Activated B cell treated with CpG ODN at 0.5 μM for 24 hours (primary cell): ENCODE measurements at regions of chr2 and their contacts with region 1.

Region 1: DNA sequence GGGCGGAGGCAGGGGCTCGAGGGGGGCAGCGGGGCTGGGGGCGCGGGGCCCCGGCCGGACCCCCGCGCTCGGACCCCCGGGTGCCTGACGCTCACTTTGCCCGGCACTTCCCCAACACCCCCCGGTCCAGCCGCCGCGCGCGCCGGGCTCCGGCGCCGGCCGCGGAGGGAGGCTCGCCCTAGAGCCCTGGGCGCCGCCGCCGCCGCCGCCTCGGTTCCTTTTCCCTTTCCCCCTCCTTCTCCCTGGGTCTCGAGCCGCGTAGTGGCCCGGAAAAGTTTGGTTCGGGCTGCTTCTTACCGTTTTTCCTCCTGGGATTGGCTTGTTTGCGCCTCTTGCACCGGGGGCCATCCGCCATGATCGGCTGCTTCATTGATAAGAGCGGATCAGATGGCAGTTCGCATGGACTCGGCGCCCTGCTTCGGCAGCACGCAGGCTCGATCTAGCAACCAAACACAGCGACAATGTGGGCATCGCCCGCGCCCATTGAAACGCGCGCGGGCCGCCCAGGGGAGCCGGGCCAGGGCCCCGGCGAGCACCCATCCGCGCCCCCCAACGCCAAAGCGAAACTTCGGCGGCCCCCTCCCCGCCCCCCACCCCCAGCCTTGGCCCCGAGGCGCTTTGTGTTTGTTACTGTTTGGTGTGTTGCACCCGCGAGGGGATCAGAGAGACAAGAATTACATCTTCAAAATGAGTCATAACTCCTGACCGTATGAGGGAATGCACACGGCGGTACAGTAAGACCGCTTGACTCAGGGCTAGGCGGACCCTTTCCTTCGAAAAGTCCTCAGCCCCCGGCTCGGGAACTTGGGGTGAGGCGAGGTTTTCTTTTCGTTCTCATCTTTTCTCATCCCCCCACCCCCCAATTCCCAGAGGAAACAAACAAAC is 2.7 kb downstream of the ZEB2 start:
- DNase-seq: peak; percentile 67
- ATAC-seq: peak; percentile 58
- H3K4me3 Mint-ChIP-seq: no peak overlapping the region
- H3K27ac Mint-ChIP-seq: no peak overlapping the region
- H3K4me1 Mint-ChIP-seq: peaks cover 47% of the 10 kb centered on the region
- H3K27me3 Mint-ChIP-seq: no peaks in the 10 kb centered on the region
- CTCF ChIP-seq: no peak

Region 2: GRCh38 chr2:143730155-143730952 is 786.9 kb before region 1 on chr2:
- CTCF ChIA-PET with region 1: no interaction called
- POLR2A ChIA-PET with region 1: interaction called, 3 read pairs
- intact Hi-C with region 1: loop called (anchors 2 kb)
- DNase-seq: no peak
- ATAC-seq: peak; percentile 77
- H3K4me3 Mint-ChIP-seq: peak overlapping the region; percentile 64
- H3K27ac Mint-ChIP-seq: peak overlapping the region; percentile 73
- H3K4me1 Mint-ChIP-seq: peaks cover 41% of the 10 kb centered on the region
- H3K27me3 Mint-ChIP-seq: no peaks in the 10 kb centered on the region
- CTCF ChIP-seq: no peak

Region 3: GRCh38 chr2:144240587-144241339 is 276.5 kb before region 1 on chr2:
- CTCF ChIA-PET with region 1: no interaction called
- POLR2A ChIA-PET with region 1: no interaction called
- intact Hi-C with region 1: loop called (anchors 5 kb)
- DNase-seq: no peak
- ATAC-seq: peak; percentile 84
- H3K4me3 Mint-ChIP-seq: peak overlapping the region; percentile 60
- H3K27ac Mint-ChIP-seq: peak overlapping the region; percentile 93
- H3K4me1 Mint-ChIP-seq: peaks cover 79% of the 10 kb centered on the region
- H3K27me3 Mint-ChIP-seq: no peaks in the 10 kb centered on the region
- CTCF ChIP-seq: no peak

Region 4: GRCh38 chr2:144414324-144414845 is 102.8 kb before region 1 on chr2:
- CTCF ChIA-PET with region 1: no interaction called
- POLR2A ChIA-PET with region 1: no interaction called
- intact Hi-C with region 1: no loop called
- DNase-seq: no peak
- ATAC-seq: peak; percentile 71
- H3K4me3 Mint-ChIP-seq: no peak overlapping the region
- H3K27ac Mint-ChIP-seq: peak overlapping the region; percentile 36
- H3K4me1 Mint-ChIP-seq: peaks cover 21% of the 10 kb centered on the region
- H3K27me3 Mint-ChIP-seq: no peaks in the 10 kb centered on the region
- CTCF ChIP-seq: no peak

Region 5: DNA sequence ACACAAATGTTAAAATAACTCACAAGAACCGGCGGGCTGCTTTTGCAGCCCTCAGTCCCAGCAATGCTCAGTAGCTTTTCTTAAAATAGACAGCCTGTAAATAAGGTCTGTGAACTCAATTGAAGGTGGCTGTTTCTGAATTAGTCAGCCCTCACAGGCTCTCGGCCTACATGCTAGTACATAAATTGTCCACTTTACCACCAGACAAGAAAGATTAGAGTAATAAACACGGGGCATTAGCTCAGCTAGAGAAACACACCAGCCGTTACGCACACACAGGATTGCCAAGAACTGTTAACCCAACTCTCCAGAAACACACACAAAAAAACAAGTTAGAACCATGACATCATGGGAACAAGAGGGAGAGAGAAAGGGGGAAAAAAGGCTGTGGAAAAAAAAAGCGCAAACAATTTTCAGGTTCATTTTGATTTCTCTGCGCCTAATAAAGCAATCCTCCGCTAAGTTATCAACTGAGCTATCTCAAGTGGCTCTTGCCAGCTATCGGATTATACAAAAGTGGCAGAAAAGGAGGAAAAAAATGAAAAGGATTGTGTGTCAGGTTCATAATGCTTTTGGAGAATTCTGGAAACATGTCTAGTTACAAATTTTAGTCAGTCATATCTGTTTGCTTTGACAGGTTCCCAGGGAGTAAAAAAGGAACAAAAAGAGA is 86.4 kb before region 1 on chr2:
- CTCF ChIA-PET with region 1: no interaction called
- POLR2A ChIA-PET with region 1: interaction called, 5 read pairs
- intact Hi-C with region 1: loop called (anchors 2 kb)
- DNase-seq: no peak
- ATAC-seq: peak; percentile 56
- H3K4me3 Mint-ChIP-seq: no peak overlapping the region
- H3K27ac Mint-ChIP-seq: no peak overlapping the region
- H3K4me1 Mint-ChIP-seq: peaks cover 44% of the 10 kb centered on the region
- H3K27me3 Mint-ChIP-seq: no peaks in the 10 kb centered on the region
- CTCF ChIP-seq: no peak

Region 6: GRCh38 chr2:144493027-144493809 is 24.0 kb before region 1 on chr2:
- CTCF ChIA-PET with region 1: no interaction called
- POLR2A ChIA-PET with region 1: no interaction called
- intact Hi-C with region 1: no loop called
- DNase-seq: no peak
- ATAC-seq: peak; percentile 63
- H3K4me3 Mint-ChIP-seq: no peak overlapping the region
- H3K27ac Mint-ChIP-seq: peak overlapping the region; percentile 64
- H3K4me1 Mint-ChIP-seq: peaks cover 87% of the 10 kb centered on the region
- H3K27me3 Mint-ChIP-seq: no peaks in the 10 kb centered on the region
- CTCF ChIP-seq: no peak

Region 7: GRCh38 chr2:144548532-144549191 is 31.4 kb after region 1 on chr2:
- CTCF ChIA-PET with region 1: no interaction called
- POLR2A ChIA-PET with region 1: interaction called, 4 read pairs
- intact Hi-C with region 1: loop called (anchors 2 kb)
- DNase-seq: no peak
- ATAC-seq: peak; percentile 96
- H3K4me3 Mint-ChIP-seq: peak overlapping the region; percentile 28
- H3K27ac Mint-ChIP-seq: no peak overlapping the region
- H3K4me1 Mint-ChIP-seq: peaks cover 22% of the 10 kb centered on the region
- H3K27me3 Mint-ChIP-seq: peaks cover 5% of the 10 kb centered on the region
- CTCF ChIP-seq: no peak

Region 8: GRCh38 chr2:144607891-144608521 is 90.8 kb after region 1 on chr2:
- CTCF ChIA-PET with region 1: no interaction called
- POLR2A ChIA-PET with region 1: interaction called, 8 read pairs
- intact Hi-C with region 1: loop called (anchors 2 kb)
- DNase-seq: no peak
- ATAC-seq: peak; percentile 32
- H3K4me3 Mint-ChIP-seq: peak overlapping the region; percentile 42
- H3K27ac Mint-ChIP-seq: peak overlapping the region; percentile 65
- H3K4me1 Mint-ChIP-seq: peaks cover 47% of the 10 kb centered on the region
- H3K27me3 Mint-ChIP-seq: no peaks in the 10 kb centered on the region
- CTCF ChIP-seq: no peak

Region 9: GRCh38 chr2:145411493-145411892 is 894.3 kb after region 1 on chr2:
- CTCF ChIA-PET with region 1: no interaction called
- POLR2A ChIA-PET with region 1: no interaction called
- intact Hi-C with region 1: loop called (anchors 1 kb)
- DNase-seq: no peak
- ATAC-seq: peak; percentile 82
- H3K4me3 Mint-ChIP-seq: peak overlapping the region; percentile 74
- H3K27ac Mint-ChIP-seq: peak overlapping the region; percentile 65
- H3K4me1 Mint-ChIP-seq: peaks cover 35% of the 10 kb centered on the region
- H3K27me3 Mint-ChIP-seq: peaks cover 3% of the 10 kb centered on the region
- CTCF ChIP-seq: no peak